CD4-positive, alpha-beta memory T cell (primary cell): ENCODE measurements at regions of chr3 and their contacts with region 1.

Region 1: GRCh38 chr3:67654099-67654843 is at the start of gene SUCLG2:
- DNase-seq: peak; percentile 71 to 85 (median 77)
- H3K4me3 ChIP-seq: peak within 1 kb of the TSS; percentile 71 to 80
- H3K4me3 Mint-ChIP-seq: peak within 1 kb of the TSS; percentile 84 to 90 (median 88)
- H3K27ac ChIP-seq: peak within 1 kb of the TSS; percentile 67
- H3K27ac Mint-ChIP-seq: peak within 1 kb of the TSS; percentile 91 to 97 (median 95)
- H3K4me1 ChIP-seq: peaks cover 67% of the 10 kb centered on the region
- H3K4me1 Mint-ChIP-seq: peaks cover 48 to 76% (median 60%) of the 10 kb centered on the region in 4 donors
- H3K27me3 ChIP-seq: no peaks in the 10 kb centered on the region
- H3K27me3 Mint-ChIP-seq: no peaks in the 10 kb centered on the region
- total RNA-seq, gene SUCLG2: 46.1 to 48.0 TPM

Region 2: DNA sequence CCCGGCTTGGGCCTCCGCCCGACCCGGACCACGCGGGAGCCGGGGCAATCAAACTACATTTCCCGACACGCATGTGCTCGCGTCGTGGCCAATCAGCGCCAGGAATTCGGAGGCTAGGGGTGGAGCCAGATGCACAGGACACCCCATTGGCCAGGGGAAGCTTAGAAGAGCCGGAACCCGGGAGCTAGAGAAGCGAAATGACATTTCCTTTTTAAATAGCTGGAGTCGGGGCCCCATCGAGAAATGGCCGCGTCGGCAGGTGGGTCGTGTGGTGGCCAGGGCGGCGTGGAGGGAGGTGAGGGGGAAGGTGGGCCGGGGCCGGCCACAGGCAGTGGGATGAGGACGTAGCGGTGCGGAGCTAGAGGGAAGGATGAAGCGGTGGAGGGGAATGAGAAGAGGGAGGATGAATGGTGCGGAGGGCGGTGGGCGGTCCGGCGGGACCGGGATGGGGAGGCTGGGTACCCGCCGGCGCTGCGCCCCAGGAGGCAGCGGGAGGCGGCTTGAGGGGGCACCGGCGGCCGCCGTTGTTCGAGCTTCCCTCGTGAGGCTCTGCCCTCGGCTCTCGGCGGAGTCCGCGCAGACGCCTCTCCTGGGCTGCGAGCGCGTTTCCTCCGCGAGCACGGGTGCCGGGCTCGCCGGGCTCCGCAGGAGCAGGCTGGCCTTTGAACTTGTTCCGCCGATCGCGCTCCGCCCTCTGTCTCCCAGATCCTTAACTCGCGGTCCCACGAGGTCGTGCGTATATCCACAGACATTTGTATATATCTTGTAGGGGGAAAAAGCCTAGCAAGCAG is 656.0 kb before region 1 on chr3 and contains the start of gene KBTBD8:
- CTCF ChIA-PET with region 1: no interaction called
- POLR2A ChIA-PET with region 1: interaction called, 7 read pairs
- intact Hi-C with region 1: loop called (anchors 2 kb)
- DNase-seq: peak; percentile 98 to 99 (median 98)
- H3K4me3 ChIP-seq: peak within 1 kb of the TSS; percentile 57 to 85
- H3K4me3 Mint-ChIP-seq: peak within 1 kb of the TSS; percentile 90 to 96 (median 94)
- H3K27ac ChIP-seq: peak within 1 kb of the TSS; percentile 67
- H3K27ac Mint-ChIP-seq: peak within 1 kb of the TSS; percentile 88 to 97 (median 95)
- H3K4me1 ChIP-seq: peaks cover 39% of the 10 kb centered on the region
- H3K4me1 Mint-ChIP-seq: peaks cover 23 to 48% (median 30%) of the 10 kb centered on the region in 4 donors
- H3K27me3 ChIP-seq: peaks cover 3% of the 10 kb centered on the region
- H3K27me3 Mint-ChIP-seq: peaks cover 0 to 4% of the 10 kb centered on the region in 2 donors
- total RNA-seq, gene KBTBD8: 8.3 to 10.8 TPM

Region 3: DNA sequence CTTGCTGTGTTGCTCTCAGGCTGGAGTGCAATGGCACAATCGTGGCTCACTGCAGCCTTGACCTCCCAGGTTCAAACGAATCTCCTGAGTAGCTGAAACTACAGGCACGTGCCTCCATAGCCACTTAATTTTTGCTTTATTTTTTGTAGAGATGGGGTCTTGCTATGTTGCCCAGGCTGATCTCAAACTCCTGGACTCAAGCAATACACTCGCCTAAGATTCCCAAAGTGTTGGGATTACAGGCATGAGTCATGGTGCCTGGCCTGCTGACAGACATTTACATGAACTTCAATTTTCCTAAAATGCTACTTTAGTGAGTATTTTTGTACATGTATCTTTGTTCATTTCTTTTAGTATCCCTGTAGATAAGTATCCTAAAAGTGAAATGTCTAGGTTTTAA is 132.2 kb before region 1 on chr3:
- CTCF ChIA-PET with region 1: no interaction called
- POLR2A ChIA-PET with region 1: no interaction called
- intact Hi-C with region 1: no loop called
- DNase-seq: no peak
- H3K4me3 ChIP-seq: no peak overlapping the region
- H3K4me3 Mint-ChIP-seq: no peak overlapping the region
- H3K27ac ChIP-seq: no peak overlapping the region
- H3K27ac Mint-ChIP-seq: no peak overlapping the region
- H3K4me1 ChIP-seq: no peaks in the 10 kb centered on the region
- H3K4me1 Mint-ChIP-seq: peaks cover 0 to 3% (median 2%) of the 10 kb centered on the region in 4 donors
- H3K27me3 ChIP-seq: no peaks in the 10 kb centered on the region
- H3K27me3 Mint-ChIP-seq: no peaks in the 10 kb centered on the region

Region 4: GRCh38 chr3:67685499-67685898 is 31.2 kb after region 1 on chr3:
- CTCF ChIA-PET with region 1: interaction called, 3 read pairs
- POLR2A ChIA-PET with region 1: interaction called, 22 read pairs
- intact Hi-C with region 1: loop called (anchors 2 kb)
- DNase-seq: peak in 4 of 5 donors; percentile 11 to 24 (median 18)
- H3K4me3 ChIP-seq: peak overlapping the region in 1 of 2 donors; percentile 15
- H3K4me3 Mint-ChIP-seq: peak overlapping the region; percentile 51 to 79 (median 63)
- H3K27ac ChIP-seq: no peak overlapping the region
- H3K27ac Mint-ChIP-seq: peak overlapping the region; percentile 25 to 80 (median 71)
- H3K4me1 ChIP-seq: peaks cover 20% of the 10 kb centered on the region
- H3K4me1 Mint-ChIP-seq: peaks cover 17 to 30% (median 23%) of the 10 kb centered on the region in 4 donors
- H3K27me3 ChIP-seq: no peaks in the 10 kb centered on the region
- H3K27me3 Mint-ChIP-seq: no peaks in the 10 kb centered on the region

Region 5: DNA sequence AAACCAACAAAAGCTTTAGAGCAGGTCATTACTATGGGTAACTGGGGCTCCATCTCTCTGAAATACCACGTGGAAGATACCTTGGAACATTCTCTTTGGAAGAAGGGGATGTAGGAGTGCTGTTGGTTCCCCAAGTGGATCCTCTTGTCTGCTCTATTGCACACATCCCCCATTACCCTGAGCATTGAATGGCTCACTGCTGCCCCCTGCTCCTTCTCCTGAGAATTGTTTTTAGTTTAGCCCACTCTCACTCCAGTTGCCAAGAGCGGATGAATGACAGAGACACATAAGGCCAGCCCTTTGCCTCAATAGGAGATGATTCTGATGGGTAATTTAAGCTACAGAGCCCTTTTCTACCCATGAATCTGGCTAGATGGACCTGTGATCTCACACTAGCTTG is 135.8 kb after region 1 on chr3:
- CTCF ChIA-PET with region 1: interaction called, 17 read pairs
- POLR2A ChIA-PET with region 1: interaction called, 9 read pairs
- intact Hi-C with region 1: loop called (anchors 5 kb)
- DNase-seq: peak; percentile 55 to 68 (median 58)
- H3K4me3 ChIP-seq: no peak overlapping the region
- H3K4me3 Mint-ChIP-seq: no peak overlapping the region
- H3K27ac ChIP-seq: no peak overlapping the region
- H3K27ac Mint-ChIP-seq: no peak overlapping the region
- H3K4me1 ChIP-seq: no peaks in the 10 kb centered on the region
- H3K4me1 Mint-ChIP-seq: peaks cover 4 to 10% (median 5%) of the 10 kb centered on the region in 4 donors
- H3K27me3 ChIP-seq: no peaks in the 10 kb centered on the region
- H3K27me3 Mint-ChIP-seq: no peaks in the 10 kb centered on the region

Region 6: GRCh38 chr3:68057637-68058320 is 403.5 kb after region 1 on chr3:
- CTCF ChIA-PET with region 1: no interaction called
- POLR2A ChIA-PET with region 1: interaction called, 5 read pairs
- intact Hi-C with region 1: loop called (anchors 5 kb)
- DNase-seq: peak; percentile 84 to 89 (median 85)
- H3K4me3 ChIP-seq: peak overlapping the region in 1 of 2 donors; percentile 33
- H3K4me3 Mint-ChIP-seq: peak overlapping the region; percentile 51 to 85 (median 82)
- H3K27ac ChIP-seq: peak overlapping the region; percentile 37
- H3K27ac Mint-ChIP-seq: peak overlapping the region; percentile 76 to 91 (median 85)
- H3K4me1 ChIP-seq: peaks cover 60% of the 10 kb centered on the region
- H3K4me1 Mint-ChIP-seq: peaks cover 49 to 80% (median 67%) of the 10 kb centered on the region in 4 donors
- H3K27me3 ChIP-seq: no peaks in the 10 kb centered on the region
- H3K27me3 Mint-ChIP-seq: no peaks in the 10 kb centered on the region

Region 7: DNA sequence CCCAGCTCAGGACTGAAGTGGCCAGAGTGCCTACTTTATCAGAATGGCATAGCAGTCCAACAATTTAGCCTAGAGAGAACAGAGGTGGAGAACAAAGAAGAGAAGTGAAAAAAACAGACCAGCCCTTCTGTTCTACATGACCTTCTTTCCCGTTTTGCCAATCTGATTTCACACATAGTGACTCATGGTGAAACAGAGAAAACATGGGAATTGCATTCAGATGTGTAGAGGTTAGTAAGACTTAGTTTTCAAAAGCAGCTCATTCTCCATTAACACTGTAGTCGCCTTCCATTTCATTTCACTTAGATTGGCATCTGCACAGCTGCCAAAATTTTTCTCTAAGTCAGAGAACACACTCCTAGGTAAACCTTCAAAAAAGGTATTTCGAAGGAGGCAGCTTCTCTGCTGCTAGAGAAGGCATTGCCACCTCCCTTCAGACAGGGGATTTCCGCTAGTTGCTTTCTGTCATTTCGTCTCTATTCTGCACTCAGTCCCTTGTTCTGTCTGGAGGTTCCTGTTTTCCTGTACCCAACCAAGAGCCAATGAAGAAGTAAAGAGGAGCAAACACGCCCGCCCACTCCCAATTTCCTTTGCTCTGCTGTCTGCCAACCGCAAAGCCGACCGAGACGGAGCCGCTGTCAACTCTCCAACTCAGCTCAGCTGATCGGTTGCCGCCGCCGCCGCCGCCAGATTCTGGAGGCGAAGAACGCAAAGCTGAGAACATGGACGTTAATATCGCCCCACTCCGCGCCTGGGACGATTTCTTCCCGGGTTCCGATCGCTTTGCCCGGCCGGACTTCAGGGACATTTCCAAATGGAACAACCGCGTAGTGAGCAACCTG is 1430.3 kb after region 1 on chr3 and contains the start of gene ARL6IP5:
- CTCF ChIA-PET with region 1: no interaction called
- POLR2A ChIA-PET with region 1: interaction called, 4 read pairs
- intact Hi-C with region 1: loop called (anchors 5 kb)
- DNase-seq: peak; percentile 89 to 96 (median 92)
- H3K4me3 ChIP-seq: peak within 1 kb of the TSS; percentile 88 to 95
- H3K4me3 Mint-ChIP-seq: peak within 1 kb of the TSS; percentile 96 to 99 (median 98)
- H3K27ac ChIP-seq: peak within 1 kb of the TSS; percentile 85
- H3K27ac Mint-ChIP-seq: peak within 1 kb of the TSS; percentile 85 to 99 (median 98)
- H3K4me1 ChIP-seq: peaks cover 69% of the 10 kb centered on the region
- H3K4me1 Mint-ChIP-seq: peaks cover 45 to 76% (median 58%) of the 10 kb centered on the region in 4 donors
- H3K27me3 ChIP-seq: no peaks in the 10 kb centered on the region
- H3K27me3 Mint-ChIP-seq: no peaks in the 10 kb centered on the region
- total RNA-seq, gene ARL6IP5: 147 to 156 TPM